ENCODE measurements at regions of chr14 and their contacts with region 1.

Region 1: DNA sequence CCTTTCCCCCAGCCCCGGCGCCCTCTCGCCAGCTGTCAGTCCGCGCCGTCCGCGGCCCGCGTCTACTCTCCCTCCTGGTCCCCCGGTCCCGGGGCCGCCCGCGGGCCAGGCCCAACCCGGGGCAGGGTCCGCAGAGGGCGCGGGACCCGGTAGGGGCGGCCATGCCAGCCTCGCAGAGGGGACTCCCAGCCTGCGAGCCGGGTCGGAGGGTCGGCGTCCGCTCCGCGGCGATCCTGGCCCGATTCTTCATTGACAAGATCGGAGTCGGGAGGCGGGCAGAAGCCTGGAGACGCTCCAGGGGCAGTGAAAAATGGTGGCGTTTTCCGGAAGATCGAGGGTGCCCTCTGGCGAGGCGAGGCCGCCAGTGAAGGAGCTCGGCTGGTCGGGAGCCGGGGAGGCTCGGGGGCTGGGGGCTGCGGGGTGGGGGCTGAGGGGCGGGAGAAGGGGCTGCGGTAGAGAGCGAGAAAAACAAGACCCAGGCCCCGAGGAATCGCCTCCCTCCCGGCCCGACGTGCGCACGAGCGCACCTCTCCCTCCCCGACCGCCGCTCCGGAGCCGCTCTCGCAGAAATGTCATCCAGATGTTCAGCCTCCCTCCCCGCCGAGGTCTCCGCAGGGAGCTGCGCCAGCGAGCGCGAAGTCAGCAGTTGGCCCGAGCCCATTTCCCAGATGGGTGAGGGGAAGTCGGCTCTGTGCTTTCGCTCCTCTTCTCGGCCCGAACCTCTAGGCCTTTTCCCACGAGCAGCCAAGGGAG is 647 bp upstream of the TGFB3 start:
- DNase-seq: peak; percentile 44
- ATAC-seq: peak; percentile 77
- H3K4me3 ChIP-seq: peak overlapping the region; percentile 72 to 84 (median 74)
- H3K27ac ChIP-seq: no peak overlapping the region
- H3K4me1 ChIP-seq: peaks cover 75% of the 10 kb centered on the region
- H3K27me3 ChIP-seq: peaks cover 0 to 11% of the 10 kb centered on the region in 2 experiments; a peak in 1 of 5 replicates
- CTCF ChIP-seq: peak; percentile 77
- EP300 ChIP-seq: no peak
- POLR2A ChIP-seq: no peak
- RAD21 ChIP-seq: peak; percentile 42; the same call in 1 of the 2 replicates

Region 2: DNA sequence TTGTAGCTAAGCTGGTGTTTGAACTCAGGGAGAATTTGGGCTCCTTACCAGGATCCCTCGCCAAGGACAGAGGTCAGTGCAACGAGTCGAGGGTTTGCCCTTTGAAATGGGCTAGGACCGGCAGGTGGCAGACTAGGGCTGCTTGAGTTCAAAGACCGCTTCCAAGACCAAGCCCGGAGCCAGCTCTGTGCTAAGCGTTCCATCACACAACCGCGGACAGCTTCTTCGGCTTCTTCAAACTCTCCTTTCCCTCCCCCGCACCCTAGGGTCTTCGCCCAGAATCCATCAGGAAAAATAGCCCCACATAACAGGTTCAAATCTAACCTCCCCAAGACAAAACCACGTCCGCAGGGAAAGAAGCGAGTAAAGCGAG is 404.7 kb before region 1 on chr14:
- CTCF ChIA-PET with region 1: no interaction called
- POLR2A ChIA-PET with region 1: no interaction called
- in situ Hi-C with region 1: no loop called
- intact Hi-C with region 1: loop called (anchors 5 kb)
- DNase-seq: peak; percentile 73
- ATAC-seq: peak; percentile 82
- H3K4me3 ChIP-seq: peak overlapping the region; percentile 64 to 91 (median 82)
- H3K27ac ChIP-seq: peak overlapping the region; percentile 60
- H3K4me1 ChIP-seq: peaks cover 44% of the 10 kb centered on the region
- H3K27me3 ChIP-seq: no peaks in the 10 kb centered on the region; a peak in 1 of 5 replicates
- CTCF ChIP-seq: peak; percentile 94
- EP300 ChIP-seq: no peak
- POLR2A ChIP-seq: no peak
- RAD21 ChIP-seq: peak; percentile 92

Region 3: DNA sequence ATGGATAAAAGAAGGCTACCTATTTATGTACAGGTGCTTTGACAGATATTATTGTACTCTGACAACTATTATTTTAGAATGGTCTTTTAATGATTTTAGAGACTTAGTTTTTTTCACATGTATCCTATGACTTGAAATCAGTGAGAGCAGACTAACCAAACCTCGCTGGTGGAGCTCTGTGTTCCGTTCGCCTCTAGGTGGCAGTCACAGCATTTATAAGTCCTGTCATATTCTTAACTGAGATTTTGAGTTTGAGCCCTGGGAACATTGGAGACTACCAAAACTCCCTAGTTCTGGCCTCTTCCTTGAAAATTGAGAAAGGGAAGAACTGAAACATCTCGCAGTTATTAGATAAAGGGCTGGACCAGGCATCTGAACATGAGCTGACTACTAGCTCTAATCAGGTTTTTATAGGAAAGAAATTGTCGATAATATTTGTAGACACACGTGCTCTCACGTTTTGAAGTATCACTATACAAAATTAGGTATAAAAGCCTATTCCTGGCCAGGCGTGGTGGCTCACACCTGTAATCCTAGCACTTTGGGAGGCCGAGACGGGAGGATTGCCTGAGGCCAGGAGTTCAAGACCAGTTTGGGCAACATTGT is 273.1 kb before region 1 on chr14:
- CTCF ChIA-PET with region 1: interaction called, 9 read pairs
- POLR2A ChIA-PET with region 1: interaction called, 3 read pairs
- in situ Hi-C with region 1: loop called (anchors 5 kb)
- intact Hi-C with region 1: loop called (anchors 1 kb)
- DNase-seq: peak; percentile 67
- ATAC-seq: peak; percentile 47
- H3K4me3 ChIP-seq: no peak overlapping the region
- H3K27ac ChIP-seq: no peak overlapping the region
- H3K4me1 ChIP-seq: peaks cover 25% of the 10 kb centered on the region
- H3K27me3 ChIP-seq: no peaks in the 10 kb centered on the region
- CTCF ChIP-seq: peak; percentile 78
- EP300 ChIP-seq: no peak
- POLR2A ChIP-seq: no peak
- RAD21 ChIP-seq: peak; percentile 49; the same call in 1 of the 2 replicates

Region 4: GRCh38 chr14:75794615-75795038 is 187.8 kb before region 1 on chr14:
- CTCF ChIA-PET with region 1: no interaction called
- POLR2A ChIA-PET with region 1: no interaction called
- in situ Hi-C with region 1: no loop called
- intact Hi-C with region 1: loop called (anchors 5 kb)
- DNase-seq: peak; percentile 9
- ATAC-seq: peak; percentile 53
- H3K4me3 ChIP-seq: no peak overlapping the region
- H3K27ac ChIP-seq: no peak overlapping the region
- H3K4me1 ChIP-seq: no peaks in the 10 kb centered on the region
- H3K27me3 ChIP-seq: no peaks in the 10 kb centered on the region
- CTCF ChIP-seq: peak; percentile 47
- EP300 ChIP-seq: no peak
- POLR2A ChIP-seq: no peak
- RAD21 ChIP-seq: no peak

Region 5: DNA sequence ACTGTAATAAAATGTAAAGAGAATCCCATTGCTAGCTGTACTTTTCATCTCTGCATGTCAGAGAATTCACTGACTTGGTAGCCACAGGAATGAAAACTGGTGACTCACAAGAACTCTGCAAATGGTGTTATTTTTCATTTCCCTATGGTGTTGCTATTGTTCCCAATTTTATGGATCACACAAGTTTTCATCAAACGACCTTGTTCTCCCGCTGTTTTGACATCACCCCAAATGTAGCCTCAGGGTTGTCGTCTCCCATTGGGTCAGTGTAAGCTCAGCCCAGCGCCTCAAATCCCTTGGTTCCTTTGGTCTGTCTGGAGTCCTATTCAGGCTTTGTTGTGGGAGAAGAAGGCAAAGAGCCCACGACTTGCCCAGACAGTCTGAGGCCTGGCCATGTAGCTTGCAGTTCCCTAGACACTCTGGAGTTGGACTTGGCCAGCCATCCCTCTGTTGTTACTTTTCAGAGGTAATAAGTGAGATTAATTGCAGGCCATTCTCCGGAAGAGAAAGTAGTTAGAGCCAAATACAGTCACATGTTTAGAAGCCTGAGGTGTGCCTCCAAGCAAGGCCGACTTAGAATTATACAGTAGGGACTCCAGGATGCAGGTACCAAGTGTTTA is 159.8 kb before region 1 on chr14:
- CTCF ChIA-PET with region 1: no interaction called
- POLR2A ChIA-PET with region 1: no interaction called
- in situ Hi-C with region 1: no loop called
- intact Hi-C with region 1: loop called (anchors 10 kb)
- DNase-seq: no peak
- ATAC-seq: no peak
- H3K4me3 ChIP-seq: no peak overlapping the region
- H3K27ac ChIP-seq: no peak overlapping the region
- H3K4me1 ChIP-seq: peaks cover 39% of the 10 kb centered on the region
- H3K27me3 ChIP-seq: no peaks in the 10 kb centered on the region
- CTCF ChIP-seq: no peak
- EP300 ChIP-seq: no peak
- POLR2A ChIP-seq: no peak
- RAD21 ChIP-seq: no peak

Region 6: DNA sequence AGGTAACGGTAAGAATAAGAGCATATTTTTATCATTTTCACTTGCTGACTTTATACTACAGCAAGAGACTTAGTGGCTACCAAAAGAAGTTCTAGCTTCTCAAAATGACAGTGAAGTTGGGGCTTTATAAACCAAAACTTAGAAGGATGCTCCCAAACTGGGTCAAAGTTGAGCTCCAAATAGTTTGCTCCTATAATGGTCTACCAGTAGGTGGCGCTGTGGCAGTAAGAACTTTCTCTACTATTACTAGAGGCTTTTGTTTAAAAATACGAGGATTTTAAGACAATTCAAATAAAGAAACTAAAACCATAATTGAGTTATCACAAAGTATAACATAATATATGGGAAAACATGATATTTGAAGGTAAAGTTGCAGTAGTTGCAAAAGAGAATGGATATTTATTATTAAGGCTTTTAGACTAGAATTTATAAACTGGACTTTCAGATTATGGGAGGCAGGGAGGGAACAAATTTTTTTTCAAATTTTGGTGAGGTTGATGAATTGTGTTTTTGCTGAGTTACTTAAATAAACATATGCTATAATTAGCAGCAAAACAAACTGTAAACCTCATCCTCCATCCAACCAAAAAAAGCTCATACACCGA is 75.7 kb before region 1 on chr14:
- CTCF ChIA-PET with region 1: interaction called, 6 read pairs
- POLR2A ChIA-PET with region 1: no interaction called
- in situ Hi-C with region 1: loop called (anchors 5 kb)
- intact Hi-C with region 1: loop called (anchors 1 kb)
- DNase-seq: peak; percentile 36
- ATAC-seq: no peak
- H3K4me3 ChIP-seq: no peak overlapping the region
- H3K27ac ChIP-seq: no peak overlapping the region
- H3K4me1 ChIP-seq: no peaks in the 10 kb centered on the region
- H3K27me3 ChIP-seq: no peaks in the 10 kb centered on the region
- CTCF ChIP-seq: peak; percentile 65
- EP300 ChIP-seq: no peak
- POLR2A ChIP-seq: no peak
- RAD21 ChIP-seq: peak; percentile 24; the same call in 1 of the 2 replicates

Region 7: DNA sequence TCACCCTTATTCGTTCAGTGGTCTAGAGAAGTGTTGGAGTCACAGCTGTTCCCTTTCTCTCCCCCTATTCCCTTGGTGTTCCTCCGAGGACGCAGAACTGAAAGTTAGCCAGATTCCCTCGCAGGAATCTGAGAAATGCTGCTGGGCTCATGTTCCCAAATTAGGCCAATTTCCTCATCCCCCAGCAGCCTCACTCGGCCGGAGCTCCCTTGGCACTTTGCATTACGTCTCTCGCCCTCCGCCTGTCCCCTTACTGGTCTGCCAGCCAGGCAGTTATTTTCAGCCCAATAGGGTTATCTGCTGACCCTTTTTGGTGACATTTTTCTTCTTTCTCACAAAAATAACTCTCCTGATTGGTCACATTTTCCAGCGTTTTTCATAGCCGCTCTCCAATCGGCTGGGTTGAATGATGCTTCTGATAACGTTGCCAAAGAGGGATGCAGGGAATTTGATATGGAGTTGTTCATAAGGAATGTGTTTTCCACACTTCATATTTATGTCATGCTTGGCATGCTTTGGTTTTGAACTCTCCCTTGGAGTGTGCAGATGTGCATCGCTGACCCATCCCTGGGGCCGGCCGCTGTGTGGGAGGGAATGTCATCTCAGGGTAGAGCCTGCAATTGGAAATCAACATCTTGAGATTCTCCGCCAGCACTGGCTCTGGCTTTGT is 13.1 kb after region 1 on chr14:
- CTCF ChIA-PET with region 1: no interaction called
- POLR2A ChIA-PET with region 1: no interaction called
- in situ Hi-C with region 1: no loop called
- intact Hi-C with region 1: no loop called
- DNase-seq: no peak
- ATAC-seq: no peak
- H3K4me3 ChIP-seq: no peak overlapping the region
- H3K27ac ChIP-seq: no peak overlapping the region
- H3K4me1 ChIP-seq: peaks cover 7% of the 10 kb centered on the region; the same call in 1 of the 2 replicates
- H3K27me3 ChIP-seq: no peaks in the 10 kb centered on the region
- CTCF ChIP-seq: no peak
- EP300 ChIP-seq: no peak
- POLR2A ChIP-seq: no peak
- RAD21 ChIP-seq: no peak

Region 8: GRCh38 chr14:76022991-76023390 is 40.5 kb after region 1 on chr14:
- CTCF ChIA-PET with region 1: no interaction called
- POLR2A ChIA-PET with region 1: no interaction called
- in situ Hi-C with region 1: no loop called
- intact Hi-C with region 1: no loop called
- DNase-seq: no peak
- ATAC-seq: no peak
- H3K4me3 ChIP-seq: no peak overlapping the region
- H3K27ac ChIP-seq: no peak overlapping the region
- H3K4me1 ChIP-seq: no peaks in the 10 kb centered on the region
- H3K27me3 ChIP-seq: no peaks in the 10 kb centered on the region
- CTCF ChIP-seq: no peak
- EP300 ChIP-seq: no peak
- POLR2A ChIP-seq: no peak
- RAD21 ChIP-seq: no peak

Region 9: DNA sequence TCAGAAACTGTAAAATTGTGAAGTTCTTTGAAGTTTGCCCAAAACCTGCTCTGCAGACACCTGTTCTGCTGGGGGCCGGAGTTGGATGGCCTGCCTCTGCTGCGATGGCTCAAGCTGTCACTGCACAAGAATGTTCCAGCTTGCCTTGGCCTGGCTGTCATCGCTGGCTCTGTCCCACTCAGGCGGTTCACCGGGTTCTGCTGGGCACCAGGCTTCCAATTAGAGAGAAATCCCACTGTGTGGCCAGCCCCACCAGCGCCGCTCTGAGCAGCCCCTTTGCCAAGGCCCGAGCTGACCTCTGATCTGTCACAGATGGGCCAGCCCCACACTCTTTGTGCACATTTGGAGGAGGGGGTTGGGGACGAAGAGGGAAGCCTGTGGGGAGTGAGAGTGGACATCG is 97.6 kb after region 1 on chr14:
- CTCF ChIA-PET with region 1: no interaction called
- POLR2A ChIA-PET with region 1: no interaction called
- in situ Hi-C with region 1: no loop called
- intact Hi-C with region 1: no loop called
- DNase-seq: no peak
- ATAC-seq: no peak
- H3K4me3 ChIP-seq: no peak overlapping the region
- H3K27ac ChIP-seq: no peak overlapping the region
- H3K4me1 ChIP-seq: no peaks in the 10 kb centered on the region; the same call in 1 of the 2 replicates
- H3K27me3 ChIP-seq: peaks cover 6 to 73% of the 10 kb centered on the region in 2 experiments; a peak in 4 of 5 replicates
- CTCF ChIP-seq: no peak
- EP300 ChIP-seq: no peak
- POLR2A ChIP-seq: no peak
- RAD21 ChIP-seq: no peak

Measured in HepG2 (cell line).